ENCODE measurements at regions of chr9 and their contacts with region 1.

Region 1: GRCh38 chr9:124658165-124659017 is 112.7 kb downstream of the NR6A1 start:
- DNase-seq: peak; percentile 23 to 88 (median 55)
- ATAC-seq: peak; percentile 89
- H3K4me3 ChIP-seq: peak overlapping the region; percentile 39
- H3K27ac ChIP-seq: peak overlapping the region; percentile 86
- H3K4me1 ChIP-seq: peaks cover 0 to 34% of the 10 kb centered on the region in 2 experiments; a peak in 4 of 5 replicates
- H3K27me3 ChIP-seq: no peaks in the 10 kb centered on the region
- CTCF ChIP-seq: no peak
- EP300 ChIP-seq: peak; percentile 51; the same call in 1 of the 2 replicates
- POLR2A ChIP-seq: peak; percentile 66; the same call in 1 of the 2 replicates
- RAD21 ChIP-seq: no peak

Region 2: DNA sequence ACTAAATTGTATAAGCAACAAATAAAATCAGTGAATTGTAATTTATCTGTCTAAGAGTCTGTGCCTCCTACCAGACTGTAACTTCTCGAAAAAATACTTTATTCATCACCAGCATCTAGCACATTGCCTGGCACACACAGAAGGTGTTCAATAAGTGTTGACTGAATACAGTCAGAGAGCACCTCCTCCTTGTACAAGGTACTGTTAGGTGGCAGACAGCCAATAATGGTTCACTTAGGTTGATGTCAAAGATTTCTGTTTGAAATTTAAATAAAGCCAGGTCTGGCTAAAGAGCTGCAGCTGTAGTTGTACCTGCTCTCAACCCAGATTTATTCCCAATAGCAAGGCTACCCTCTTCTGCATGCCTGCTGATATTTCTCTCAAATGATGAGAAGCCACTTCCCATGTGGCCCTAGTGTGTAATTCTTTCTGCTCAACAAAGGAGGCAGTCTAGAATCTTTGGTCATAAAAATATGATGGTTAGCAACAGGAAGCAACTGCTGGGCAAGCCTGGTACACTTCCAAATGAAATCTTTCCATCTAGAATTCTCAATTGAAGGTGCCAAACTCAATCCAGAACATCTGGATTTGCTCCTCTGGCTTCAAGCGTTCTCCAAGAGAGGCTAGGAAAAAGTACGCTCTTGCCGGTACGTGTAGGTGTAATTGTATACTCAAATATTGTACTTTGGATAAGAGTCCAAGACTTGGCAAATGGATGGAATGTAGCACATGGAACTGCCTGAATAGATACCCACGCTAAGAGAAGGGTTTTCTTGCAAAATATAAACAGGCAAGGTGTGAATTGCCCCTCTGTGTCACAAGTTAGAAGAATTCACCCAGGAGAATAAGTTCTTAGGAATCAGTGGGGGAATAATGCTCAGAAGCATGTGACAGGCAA is 17.1 kb after region 1 on chr9:
- CTCF ChIA-PET with region 1: no interaction called
- POLR2A ChIA-PET with region 1: interaction called, 16 read pairs
- in situ Hi-C with region 1: no loop called
- intact Hi-C with region 1: no loop called
- DNase-seq: no peak
- ATAC-seq: peak; percentile 43; the same call in 1 of the 3 replicates
- H3K4me3 ChIP-seq: no peak overlapping the region
- H3K27ac ChIP-seq: no peak overlapping the region
- H3K4me1 ChIP-seq: no peaks in the 10 kb centered on the region; a peak in 1 of 5 replicates
- H3K27me3 ChIP-seq: no peaks in the 10 kb centered on the region
- CTCF ChIP-seq: peak in 1 of 3 experiments; percentile 7; a peak in 1 of 6 replicates
- EP300 ChIP-seq: no peak
- POLR2A ChIP-seq: no peak
- RAD21 ChIP-seq: no peak

Region 3: GRCh38 chr9:124697326-124698200 is 39.2 kb after region 1 on chr9:
- CTCF ChIA-PET with region 1: no interaction called
- POLR2A ChIA-PET with region 1: interaction called, 3 read pairs
- in situ Hi-C with region 1: no loop called
- intact Hi-C with region 1: loop called (anchors 2 kb)
- DNase-seq: no peak
- ATAC-seq: no peak
- H3K4me3 ChIP-seq: no peak overlapping the region
- H3K27ac ChIP-seq: no peak overlapping the region
- H3K4me1 ChIP-seq: peaks cover 7 to 14% of the 10 kb centered on the region in 2 experiments; a peak in 4 of 5 replicates
- H3K27me3 ChIP-seq: no peaks in the 10 kb centered on the region
- CTCF ChIP-seq: no peak
- EP300 ChIP-seq: no peak
- POLR2A ChIP-seq: no peak
- RAD21 ChIP-seq: no peak

Measured in K562 (cell line).